PC-3 (cell line): ENCODE measurements at regions of chr3 and their contacts with region 1.

Region 1: GRCh38 chr3:151890721-151891141 is 17.3 kb downstream of the SUCNR1 start:
- DNase-seq: peak; percentile 92
- ATAC-seq: peak; percentile 99
- H3K4me3 ChIP-seq: no peak overlapping the region
- H3K27ac ChIP-seq: no peak overlapping the region
- H3K4me1 ChIP-seq: peaks cover 15% of the 10 kb centered on the region
- H3K27me3 ChIP-seq: no peaks in the 10 kb centered on the region
- CTCF ChIP-seq: no peak

Region 2: DNA sequence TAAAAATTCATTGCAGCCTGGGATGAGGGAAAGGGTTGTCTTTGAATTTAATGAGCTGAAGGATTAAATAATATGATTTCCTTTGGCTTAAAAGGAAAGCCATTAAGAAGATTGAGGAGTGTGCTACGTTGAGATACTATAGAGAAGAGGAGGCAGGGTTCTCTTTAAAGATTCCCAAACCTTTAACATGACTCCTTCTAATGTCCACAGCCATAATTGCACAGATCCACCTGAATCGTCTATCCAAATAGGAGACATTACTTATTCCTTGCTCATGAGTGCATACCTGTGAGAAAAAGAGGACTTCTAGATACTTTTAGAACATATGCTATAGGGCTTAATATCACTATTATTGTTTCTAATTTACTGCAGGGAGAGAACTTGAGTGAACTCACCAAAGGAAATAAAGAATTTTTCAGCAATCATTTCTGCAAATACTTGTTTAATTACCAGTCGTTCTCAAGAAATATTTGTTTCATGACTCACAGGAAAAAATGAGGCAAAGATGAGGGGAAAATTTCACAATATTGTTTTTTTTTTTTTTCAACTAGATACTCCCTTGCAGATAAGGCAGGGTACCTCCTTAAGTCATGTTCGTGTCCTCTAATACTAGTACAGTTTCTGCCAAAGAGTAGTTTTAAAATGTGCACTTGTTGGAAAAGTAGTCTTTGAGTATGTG is 26.2 kb before region 1 on chr3:
- CTCF ChIA-PET with region 1: no interaction called
- POLR2A ChIA-PET with region 1: no interaction called
- intact Hi-C with region 1: loop called (anchors 2 kb)
- DNase-seq: peak; percentile 89
- ATAC-seq: peak; percentile 68
- H3K4me3 ChIP-seq: no peak overlapping the region; the same call in 1 of the 2 replicates
- H3K27ac ChIP-seq: peak overlapping the region; percentile 2; the same call in 1 of the 2 replicates
- H3K4me1 ChIP-seq: peaks cover 24% of the 10 kb centered on the region
- H3K27me3 ChIP-seq: no peaks in the 10 kb centered on the region
- CTCF ChIP-seq: no peak

Region 3: DNA sequence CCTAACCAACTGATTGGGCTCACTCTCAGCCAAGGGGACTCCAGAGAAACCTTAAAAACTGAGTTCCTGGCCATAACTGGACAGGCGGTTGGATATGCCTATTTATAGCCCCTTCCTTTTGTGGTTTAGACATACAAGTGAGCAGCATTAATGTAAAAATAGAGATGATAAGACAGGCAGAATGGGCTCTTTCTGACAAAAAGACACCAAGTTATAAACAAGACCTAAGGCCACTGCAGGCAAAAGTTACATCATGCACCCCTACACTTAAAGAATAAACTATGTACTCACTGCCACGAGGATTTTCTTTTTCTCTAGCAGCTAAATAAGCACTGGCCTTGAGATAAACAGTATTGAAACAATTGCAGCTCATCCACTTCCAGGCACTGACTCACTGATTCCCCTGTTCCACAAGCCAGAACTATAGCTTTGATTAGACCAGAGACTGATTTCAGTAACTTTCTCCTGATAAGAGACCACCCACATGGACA is 12.8 kb after region 1 on chr3:
- CTCF ChIA-PET with region 1: no interaction called
- POLR2A ChIA-PET with region 1: no interaction called
- intact Hi-C with region 1: loop called (anchors 2 kb)
- DNase-seq: no peak
- ATAC-seq: no peak
- H3K4me3 ChIP-seq: no peak overlapping the region
- H3K27ac ChIP-seq: no peak overlapping the region
- H3K4me1 ChIP-seq: peaks cover 46% of the 10 kb centered on the region
- H3K27me3 ChIP-seq: no peaks in the 10 kb centered on the region
- CTCF ChIP-seq: no peak

Region 4: DNA sequence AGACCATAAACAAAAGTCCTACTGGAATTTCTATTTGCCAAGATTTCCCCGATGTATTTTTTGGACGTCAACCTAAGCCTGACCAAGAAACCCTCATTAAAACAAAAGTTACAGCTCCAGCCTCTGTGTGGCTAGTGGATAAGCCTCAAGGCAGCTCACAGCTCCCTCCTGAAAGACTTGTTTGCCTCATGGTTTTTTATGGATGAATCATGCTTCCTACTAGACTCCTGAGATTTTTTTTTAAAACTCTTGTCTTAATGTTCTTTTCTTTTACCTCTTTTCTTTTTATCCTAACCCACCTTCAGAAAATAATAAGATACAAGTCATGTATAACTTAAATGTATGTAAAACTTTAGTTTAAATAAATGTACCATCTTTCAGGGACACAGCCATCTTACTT is 35.1 kb after region 1 on chr3:
- CTCF ChIA-PET with region 1: no interaction called
- POLR2A ChIA-PET with region 1: no interaction called
- intact Hi-C with region 1: loop called (anchors 2 kb)
- DNase-seq: peak; percentile 89
- ATAC-seq: peak; percentile 89
- H3K4me3 ChIP-seq: peak overlapping the region; percentile 57; the same call in 1 of the 2 replicates
- H3K27ac ChIP-seq: peak overlapping the region; percentile 92
- H3K4me1 ChIP-seq: peaks cover 47% of the 10 kb centered on the region
- H3K27me3 ChIP-seq: no peaks in the 10 kb centered on the region
- CTCF ChIP-seq: no peak